Activated CD4-positive, alpha-beta memory T cell treated with anti-CD3 and anti-CD28 coated beads, Interleukin-2, amount 10 ng/mL, durations not matched to agents 7 days and 5 days (primary cell): ENCODE measurements at regions of chr16 and their contacts with region 1.

Region 1: DNA sequence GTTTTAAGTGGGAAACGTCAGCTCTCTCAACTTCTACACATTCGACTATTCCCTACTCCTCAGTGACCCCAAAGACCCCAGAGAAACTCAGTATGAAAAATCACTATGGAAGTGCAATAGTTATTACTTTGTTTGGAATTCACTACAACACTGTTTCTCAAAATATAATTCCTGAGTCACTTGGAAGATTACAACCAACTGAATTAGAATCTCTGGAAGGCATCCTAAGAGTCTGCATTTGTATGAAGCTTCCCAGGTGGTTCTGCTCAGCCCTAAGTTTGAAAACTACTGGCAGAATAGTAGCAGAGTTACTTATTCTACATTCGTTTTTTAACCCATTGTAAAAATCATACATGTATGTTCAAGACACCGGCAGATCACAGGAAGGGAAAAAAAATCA is 525.6 kb downstream of the MAF start:
- DNase-seq: no peak
- H3K4me3 Mint-ChIP-seq: no peak overlapping the region
- H3K27ac Mint-ChIP-seq: no peak overlapping the region
- H3K4me1 Mint-ChIP-seq: peaks cover 71% of the 10 kb centered on the region
- H3K27me3 Mint-ChIP-seq: no peaks in the 10 kb centered on the region

Region 2: DNA sequence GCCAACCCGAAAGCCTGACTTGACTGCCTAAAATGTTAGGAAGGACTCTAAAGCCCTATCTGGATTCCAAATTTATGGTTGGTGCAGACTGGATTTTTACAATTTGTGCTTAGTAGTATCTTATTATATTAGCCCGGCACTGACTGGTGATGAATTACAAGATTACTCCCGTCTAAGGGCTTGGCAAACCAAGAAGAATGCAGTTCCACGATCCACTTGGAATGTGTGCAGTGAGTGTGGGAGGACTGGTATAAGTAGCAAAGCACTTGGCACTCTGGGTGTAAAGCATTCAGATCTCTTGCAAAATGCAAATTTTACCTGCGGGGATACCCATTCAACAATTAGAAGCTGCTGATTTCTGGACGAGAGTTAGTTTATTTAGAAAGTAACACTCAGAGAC is 13.8 kb before region 1 on chr16:
- CTCF ChIA-PET with region 1: interaction called, 10 read pairs
- POLR2A ChIA-PET with region 1: interaction called, 3 read pairs
- DNase-seq: no peak
- H3K4me3 Mint-ChIP-seq: no peak overlapping the region
- H3K27ac Mint-ChIP-seq: no peak overlapping the region
- H3K4me1 Mint-ChIP-seq: peaks cover 8% of the 10 kb centered on the region
- H3K27me3 Mint-ChIP-seq: peaks cover 2% of the 10 kb centered on the region